Heart right ventricle (tissue), 16 donors: ENCODE measurements at regions of chr10 and their contacts with region 1.

Region 1: GRCh38 chr10:28432210-28432676 is 100.7 kb upstream of the WAC start:
- DNase-seq: peak; percentile 36 to 68
- ATAC-seq: peak; percentile 72 to 92 (median 86)
- H3K4me3 ChIP-seq: no peak overlapping the region
- H3K27ac ChIP-seq: peak overlapping the region in 1 of 10 donors; percentile 18
- H3K4me1 ChIP-seq: peaks cover 0 to 10% (median 4%) of the 10 kb centered on the region in 9 donors
- H3K27me3 ChIP-seq: peaks cover 0 to under 1% (median 0%) of the 10 kb centered on the region in 7 donors
- CTCF ChIP-seq: peak; percentile 57 to 87 (median 81)

Region 2: DNA sequence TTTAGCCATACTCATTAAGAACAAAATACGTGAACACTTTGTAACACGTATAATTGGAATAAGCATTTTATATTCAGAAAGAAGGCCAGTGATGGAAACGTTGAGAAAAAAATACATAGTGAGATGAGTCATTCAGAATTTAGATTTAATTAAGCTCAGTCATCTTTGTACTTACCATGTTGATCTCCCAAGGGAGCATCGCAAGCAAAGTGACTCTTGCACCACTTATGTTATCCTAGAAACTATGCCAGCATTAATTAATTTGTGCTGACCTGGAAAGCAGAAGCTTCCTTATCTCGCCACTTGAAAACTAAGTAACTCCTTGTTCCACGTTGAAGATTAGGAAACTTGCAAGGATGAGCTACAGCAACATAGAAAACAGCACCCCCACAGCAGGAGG is 119.7 kb before region 1 on chr10:
- intact Hi-C with region 1: no loop called
- DNase-seq: no peak
- ATAC-seq: no peak
- H3K4me3 ChIP-seq: no peak overlapping the region
- H3K27ac ChIP-seq: no peak overlapping the region
- H3K4me1 ChIP-seq: peaks cover 0 to 8% (median 0%) of the 10 kb centered on the region in 9 donors
- H3K27me3 ChIP-seq: peaks cover 0 to 29% (median 3%) of the 10 kb centered on the region in 7 donors
- CTCF ChIP-seq: no peak

Region 3: GRCh38 chr10:28367929-28368484 is 64.2 kb before region 1 on chr10:
- intact Hi-C with region 1: no loop called
- DNase-seq: no peak
- ATAC-seq: peak in 5 of 8 donors; percentile 38 to 62 (median 52)
- H3K4me3 ChIP-seq: no peak overlapping the region
- H3K27ac ChIP-seq: peak overlapping the region in 1 of 10 donors; percentile 62
- H3K4me1 ChIP-seq: peaks cover 0 to 33% (median 0%) of the 10 kb centered on the region in 9 donors
- H3K27me3 ChIP-seq: peaks cover 0 to 4% (median 0%) of the 10 kb centered on the region in 7 donors
- CTCF ChIP-seq: no peak

Region 4: DNA sequence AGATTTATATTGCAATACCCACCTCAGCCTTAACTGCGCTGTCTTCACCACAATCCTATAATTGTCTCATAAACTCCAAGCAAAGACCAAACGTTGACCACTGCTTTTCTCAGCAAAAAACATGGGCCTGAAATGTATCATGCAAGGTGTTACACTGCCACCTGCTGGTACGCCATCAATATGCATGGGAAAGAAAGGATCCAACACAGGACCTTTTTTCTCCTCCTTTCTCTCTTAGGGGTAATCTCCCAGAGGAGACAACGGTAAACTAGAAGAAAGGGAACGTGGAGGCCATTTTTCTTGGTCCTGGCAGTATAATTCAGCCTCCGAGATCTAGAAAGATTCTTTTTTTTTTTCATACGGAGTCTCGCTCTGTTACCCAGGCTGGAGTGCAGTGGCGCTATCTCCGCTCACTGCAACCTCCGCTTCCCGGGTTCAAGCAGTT is 50.3 kb before region 1 on chr10:
- intact Hi-C with region 1: no loop called
- DNase-seq: peak; percentile 47 to 79
- ATAC-seq: peak; percentile 77 to 93 (median 86)
- H3K4me3 ChIP-seq: no peak overlapping the region
- H3K27ac ChIP-seq: no peak overlapping the region
- H3K4me1 ChIP-seq: peaks cover 0 to 22% (median 0%) of the 10 kb centered on the region in 9 donors
- H3K27me3 ChIP-seq: peaks cover 0 to 8% (median 3%) of the 10 kb centered on the region in 7 donors
- CTCF ChIP-seq: peak; percentile 77 to 95 (median 92)

Region 5: DNA sequence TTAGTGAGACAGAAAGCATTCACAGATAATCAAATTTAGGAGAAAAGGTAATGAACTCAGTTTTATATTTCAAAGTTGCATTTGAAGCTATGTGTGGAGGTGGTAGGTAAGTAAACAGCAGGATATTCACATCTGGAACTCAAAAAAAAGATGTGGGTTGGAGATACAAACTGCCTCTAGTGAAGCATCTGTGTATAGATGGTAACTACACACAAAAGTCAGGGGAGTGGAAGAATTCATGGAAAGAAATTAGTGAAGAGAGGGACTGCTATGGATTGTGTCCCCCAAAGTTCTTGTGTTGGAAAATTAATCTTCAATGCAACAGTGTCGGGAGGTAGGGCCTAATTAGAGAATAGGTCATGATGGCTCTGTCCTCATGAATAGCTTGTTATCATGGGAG is 82.4 kb after region 1 on chr10:
- intact Hi-C with region 1: loop called in 1 of 10 experiments (anchors 10 kb)
- DNase-seq: no peak
- ATAC-seq: no peak
- H3K4me3 ChIP-seq: no peak overlapping the region
- H3K27ac ChIP-seq: no peak overlapping the region
- H3K4me1 ChIP-seq: no peaks in the 10 kb centered on the region
- H3K27me3 ChIP-seq: no peaks in the 10 kb centered on the region
- CTCF ChIP-seq: no peak

Region 6: GRCh38 chr10:28532383-28533175 is 100.3 kb after region 1 on chr10 and contains the start of gene WAC:
- intact Hi-C with region 1: loop called in 2 of 10 experiments (anchors 5 kb)
- DNase-seq: peak; percentile 96 to 98
- ATAC-seq: peak; percentile 95 to 98 (median 98)
- H3K4me3 ChIP-seq: peak within 1 kb of the TSS; percentile 81 to 94 (median 92)
- H3K27ac ChIP-seq: peak within 1 kb of the TSS; percentile 97 to 100 (median 99)
- H3K4me1 ChIP-seq: peaks cover 0 to 54% (median 44%) of the 10 kb centered on the region in 9 donors
- H3K27me3 ChIP-seq: no peaks in the 10 kb centered on the region
- CTCF ChIP-seq: peak in 3 of 9 donors; percentile 10 to 33 (median 15)
- total RNA-seq, gene WAC: 83.8 to 134 (median 95.3) TPM

Region 7: GRCh38 chr10:28587970-28588290 is 155.7 kb after region 1 on chr10:
- intact Hi-C with region 1: loop called in 7 of 10 experiments (anchors 2 to 5 kb)
- DNase-seq: no peak
- ATAC-seq: peak; percentile 61 to 89 (median 82)
- H3K4me3 ChIP-seq: no peak overlapping the region
- H3K27ac ChIP-seq: peak overlapping the region in 4 of 10 donors; percentile 6 to 42 (median 26)
- H3K4me1 ChIP-seq: peaks cover 0 to 58% (median 37%) of the 10 kb centered on the region in 9 donors
- H3K27me3 ChIP-seq: no peaks in the 10 kb centered on the region
- CTCF ChIP-seq: peak in 8 of 9 donors; percentile 11 to 58 (median 38)

Region 8: GRCh38 chr10:28628184-28628893 is 196.1 kb after region 1 on chr10:
- intact Hi-C with region 1: loop called in 1 of 10 experiments (anchors 10 kb)
- DNase-seq: peak; percentile 71 to 76
- ATAC-seq: peak; percentile 85 to 94 (median 90)
- H3K4me3 ChIP-seq: no peak overlapping the region
- H3K27ac ChIP-seq: no peak overlapping the region
- H3K4me1 ChIP-seq: peaks cover 0 to 9% (median 0%) of the 10 kb centered on the region in 9 donors
- H3K27me3 ChIP-seq: peaks cover 0 to 19% (median 0%) of the 10 kb centered on the region in 7 donors
- CTCF ChIP-seq: peak; percentile 74 to 93 (median 91)